Activated CD4-positive, alpha-beta T cell treated with anti-CD3 and anti-CD28 coated beads, Interleukin-2, amount 10 ng/mL, durations not matched to agents 7 days and 5 days (primary cell): ENCODE measurements at regions of chr3 and their contacts with region 1.

Region 1: GRCh38 chr3:58305882-58306711 is at the starts of genes HTD2 and RPP14:
- DNase-seq: peak; percentile 99
- H3K4me3 Mint-ChIP-seq: peak within 1 kb of the TSS; percentile 93
- H3K27ac Mint-ChIP-seq: peak within 1 kb of the TSS; percentile 99
- H3K4me1 Mint-ChIP-seq: peaks cover 35% of the 10 kb centered on the region
- H3K27me3 Mint-ChIP-seq: peaks cover 15% of the 10 kb centered on the region
- total RNA-seq, gene HTD2: 6.2 to 7.0 TPM
- total RNA-seq, gene RPP14: 12.7 to 15.4 TPM

Region 2: DNA sequence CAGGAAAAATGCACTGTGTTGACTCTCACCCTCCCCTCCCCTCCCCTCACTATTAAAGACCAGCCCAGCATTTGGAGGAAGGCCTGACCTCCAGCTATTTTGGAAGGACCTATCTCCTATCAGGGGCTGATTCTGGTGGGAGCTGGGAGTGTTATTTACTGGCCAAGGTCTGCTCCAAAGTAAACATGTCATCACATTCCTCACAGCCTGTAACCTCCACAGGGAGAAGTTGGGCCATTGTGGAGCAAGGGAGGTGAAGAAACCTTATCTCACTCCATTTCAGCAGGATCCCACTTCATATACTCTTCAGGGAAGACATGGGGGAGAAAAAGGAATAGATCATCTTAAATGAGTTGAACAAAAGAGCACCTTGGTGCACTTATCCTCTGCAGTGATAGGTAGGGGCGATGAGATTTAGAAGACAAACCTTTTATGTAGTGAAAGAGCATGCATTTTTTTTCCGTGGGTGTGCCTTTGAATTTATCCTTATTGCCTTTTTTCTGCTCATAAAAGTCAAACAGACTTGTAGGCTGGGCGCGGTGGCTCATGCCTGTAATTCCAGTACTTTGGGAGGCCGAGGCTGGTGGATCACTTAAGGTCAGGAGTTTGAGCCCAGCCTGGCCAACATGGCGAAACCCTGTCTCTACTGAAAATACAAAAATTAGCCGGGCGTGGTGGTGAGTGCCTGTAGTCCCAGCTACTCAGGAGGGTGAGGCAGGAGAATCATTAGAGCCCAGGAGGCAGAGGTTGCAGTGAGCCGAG is 313.5 kb before region 1 on chr3:
- CTCF ChIA-PET with region 1: no interaction called
- POLR2A ChIA-PET with region 1: no interaction called
- DNase-seq: no peak
- H3K4me3 Mint-ChIP-seq: no peak overlapping the region
- H3K27ac Mint-ChIP-seq: no peak overlapping the region
- H3K4me1 Mint-ChIP-seq: no peaks in the 10 kb centered on the region
- H3K27me3 Mint-ChIP-seq: no peaks in the 10 kb centered on the region

Region 3: DNA sequence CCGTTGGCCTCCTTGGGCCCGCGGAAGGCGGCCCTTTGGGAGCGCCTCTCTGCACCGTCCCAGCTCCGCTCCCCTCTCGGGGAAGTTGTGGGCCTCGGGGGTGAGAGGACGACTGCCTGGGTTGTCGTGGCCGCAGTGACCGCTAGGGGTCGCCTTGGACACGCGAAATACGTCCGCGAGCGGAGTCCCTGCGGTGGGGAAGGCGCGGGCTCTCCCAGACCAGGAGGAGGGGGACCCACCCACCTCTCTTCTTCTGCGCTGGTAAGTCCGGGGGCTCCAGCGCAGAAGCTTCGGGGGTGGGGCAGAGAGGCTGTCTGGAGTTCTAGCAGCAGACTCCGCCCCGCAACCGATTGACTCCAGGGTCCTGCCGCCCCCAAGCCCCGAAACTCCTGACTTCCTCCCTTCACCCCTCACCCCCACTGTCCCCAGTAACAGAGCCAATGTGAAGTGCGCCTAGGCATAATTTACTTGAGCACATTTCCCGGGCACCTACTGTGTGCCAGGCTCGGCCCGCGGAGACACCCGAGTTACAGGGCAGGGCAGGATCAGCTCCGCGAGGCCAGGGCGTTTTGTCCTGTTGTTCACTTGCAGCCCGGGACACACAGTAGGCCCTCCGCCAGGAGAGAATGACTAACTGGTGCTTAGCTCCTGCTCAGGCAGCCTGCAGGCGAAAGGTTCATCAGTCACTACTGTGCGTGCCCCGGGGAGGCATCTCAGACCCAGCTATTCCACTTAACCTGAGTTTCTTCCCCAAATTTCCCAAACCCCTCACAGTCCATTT is 128.2 kb before region 1 on chr3:
- CTCF ChIA-PET with region 1: interaction called, 13 read pairs
- POLR2A ChIA-PET with region 1: no interaction called
- DNase-seq: peak; percentile 91
- H3K4me3 Mint-ChIP-seq: peak overlapping the region; percentile 52
- H3K27ac Mint-ChIP-seq: no peak overlapping the region
- H3K4me1 Mint-ChIP-seq: peaks cover 20% of the 10 kb centered on the region
- H3K27me3 Mint-ChIP-seq: peaks cover 7% of the 10 kb centered on the region

Region 4: GRCh38 chr3:58234516-58234931 is 71.6 kb before region 1 on chr3:
- CTCF ChIA-PET with region 1: interaction called, 14 read pairs
- POLR2A ChIA-PET with region 1: no interaction called
- DNase-seq: no peak
- H3K4me3 Mint-ChIP-seq: no peak overlapping the region
- H3K27ac Mint-ChIP-seq: no peak overlapping the region
- H3K4me1 Mint-ChIP-seq: peaks cover 19% of the 10 kb centered on the region
- H3K27me3 Mint-ChIP-seq: peaks cover 46% of the 10 kb centered on the region

Region 5: DNA sequence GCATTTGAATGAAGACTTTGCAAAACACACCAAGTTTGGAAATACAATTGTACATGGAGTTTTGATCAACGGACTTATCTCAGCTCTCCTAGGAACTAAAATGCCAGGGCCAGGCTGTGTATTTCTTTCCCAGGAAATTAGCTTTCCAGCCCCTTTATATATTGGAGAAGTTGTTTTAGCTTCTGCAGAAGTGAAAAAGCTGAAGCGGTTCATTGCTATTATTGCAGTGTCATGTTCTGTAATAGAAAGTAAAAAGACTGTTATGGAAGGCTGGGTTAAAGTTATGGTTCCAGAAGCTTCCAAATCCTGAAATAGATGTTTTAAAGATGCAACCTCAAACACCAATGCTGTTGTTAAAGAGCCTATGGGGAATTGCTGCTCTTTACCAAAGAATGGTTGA is 11.7 kb after region 1 on chr3:
- CTCF ChIA-PET with region 1: interaction called, 23 read pairs
- POLR2A ChIA-PET with region 1: no interaction called
- DNase-seq: no peak
- H3K4me3 Mint-ChIP-seq: no peak overlapping the region
- H3K27ac Mint-ChIP-seq: no peak overlapping the region
- H3K4me1 Mint-ChIP-seq: peaks cover 2% of the 10 kb centered on the region
- H3K27me3 Mint-ChIP-seq: no peaks in the 10 kb centered on the region

Region 6: DNA sequence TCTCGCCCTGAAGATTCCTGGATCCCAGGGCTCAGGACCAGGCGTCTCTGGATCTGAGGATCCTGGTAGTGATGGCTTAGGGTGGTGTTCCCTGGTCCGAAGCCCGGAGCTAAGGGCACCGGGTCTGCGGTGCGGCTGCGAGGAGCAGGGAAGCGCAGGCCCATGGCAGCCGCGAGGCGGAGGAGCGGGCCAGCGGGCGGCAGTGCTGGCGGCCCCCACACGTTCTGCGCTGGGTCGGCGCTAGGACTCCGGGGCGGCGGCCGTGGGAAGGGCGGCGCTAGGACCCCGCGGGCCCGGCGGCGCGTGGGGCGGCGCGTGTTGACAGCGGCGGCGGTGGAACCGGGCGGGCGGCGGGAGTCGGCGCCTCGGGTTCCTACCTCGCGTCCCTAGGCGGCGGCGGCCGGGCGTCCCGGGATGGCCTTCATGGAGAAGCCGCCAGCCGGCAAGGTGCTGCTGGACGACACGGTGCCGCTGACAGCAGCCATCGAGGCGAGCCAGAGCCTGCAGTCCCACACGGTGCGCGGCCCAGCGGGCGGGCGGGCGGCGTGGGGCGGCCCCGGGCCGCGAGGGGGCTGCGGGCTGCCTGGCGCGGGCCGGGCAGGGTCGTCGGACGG is 26.6 kb after region 1 on chr3 and contains the start of gene PXK:
- CTCF ChIA-PET with region 1: interaction called, 24 read pairs
- POLR2A ChIA-PET with region 1: no interaction called
- DNase-seq: peak; percentile 75
- H3K4me3 Mint-ChIP-seq: peak within 1 kb of the TSS; percentile 100
- H3K27ac Mint-ChIP-seq: peak within 1 kb of the TSS; percentile 97
- H3K4me1 Mint-ChIP-seq: peaks cover 46% of the 10 kb centered on the region
- H3K27me3 Mint-ChIP-seq: no peaks in the 10 kb centered on the region
- total RNA-seq, gene PXK: 30.3 to 40.2 TPM

Region 7: GRCh38 chr3:58414538-58415197 is 108.6 kb after region 1 on chr3:
- CTCF ChIA-PET with region 1: interaction called, 13 read pairs
- POLR2A ChIA-PET with region 1: interaction called, 3 read pairs
- DNase-seq: peak; percentile 75
- H3K4me3 Mint-ChIP-seq: no peak overlapping the region
- H3K27ac Mint-ChIP-seq: no peak overlapping the region
- H3K4me1 Mint-ChIP-seq: peaks cover 6% of the 10 kb centered on the region
- H3K27me3 Mint-ChIP-seq: no peaks in the 10 kb centered on the region

Region 8: DNA sequence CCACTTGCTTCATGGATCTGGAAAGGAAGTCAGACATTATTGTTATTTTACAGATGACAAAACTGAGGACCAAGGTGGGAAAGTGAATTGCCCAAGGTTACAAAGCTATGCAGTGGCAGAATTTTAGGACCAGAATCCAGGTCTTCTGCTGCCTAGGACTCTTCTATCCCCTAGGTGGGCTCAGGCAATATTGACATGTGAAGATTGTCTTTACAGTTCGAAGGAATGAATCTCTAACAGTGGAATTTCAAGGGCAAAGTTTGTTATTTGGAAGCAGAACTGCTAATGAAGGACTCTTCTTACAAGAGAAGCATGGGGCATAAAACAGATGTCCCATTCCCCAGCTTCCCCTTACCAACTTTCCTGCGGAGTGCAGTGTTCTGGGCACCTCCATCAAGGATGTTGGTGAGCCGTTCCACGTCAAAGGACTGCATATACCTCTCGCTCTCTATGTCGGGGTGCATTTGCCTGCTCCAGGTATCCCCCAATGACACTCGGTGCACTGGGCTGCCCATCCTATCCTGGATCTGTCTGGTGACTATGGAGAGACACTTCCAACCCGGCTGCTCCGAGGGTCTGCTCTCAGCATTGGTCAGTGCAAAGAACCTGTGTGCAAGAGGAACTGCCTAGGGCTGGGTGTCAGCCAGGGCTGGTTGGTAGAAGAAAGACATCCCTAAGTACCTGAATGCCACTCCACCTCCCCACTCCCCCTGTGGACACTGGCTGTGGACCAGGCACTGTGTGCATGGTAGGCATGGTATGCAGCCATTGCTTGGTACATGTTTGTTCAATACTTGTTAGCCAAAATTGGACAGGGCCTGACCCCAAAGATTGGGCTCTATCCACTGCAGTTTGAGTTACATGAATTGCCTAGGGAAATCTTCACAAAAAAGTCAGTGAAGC is 228.7 kb after region 1 on chr3:
- CTCF ChIA-PET with region 1: interaction called, 10 read pairs
- POLR2A ChIA-PET with region 1: no interaction called
- DNase-seq: no peak
- H3K4me3 Mint-ChIP-seq: no peak overlapping the region
- H3K27ac Mint-ChIP-seq: no peak overlapping the region
- H3K4me1 Mint-ChIP-seq: peaks cover 15% of the 10 kb centered on the region
- H3K27me3 Mint-ChIP-seq: no peaks in the 10 kb centered on the region